ENCODE measurements at regions of chr22 and their contacts with region 1.

Region 1: DNA sequence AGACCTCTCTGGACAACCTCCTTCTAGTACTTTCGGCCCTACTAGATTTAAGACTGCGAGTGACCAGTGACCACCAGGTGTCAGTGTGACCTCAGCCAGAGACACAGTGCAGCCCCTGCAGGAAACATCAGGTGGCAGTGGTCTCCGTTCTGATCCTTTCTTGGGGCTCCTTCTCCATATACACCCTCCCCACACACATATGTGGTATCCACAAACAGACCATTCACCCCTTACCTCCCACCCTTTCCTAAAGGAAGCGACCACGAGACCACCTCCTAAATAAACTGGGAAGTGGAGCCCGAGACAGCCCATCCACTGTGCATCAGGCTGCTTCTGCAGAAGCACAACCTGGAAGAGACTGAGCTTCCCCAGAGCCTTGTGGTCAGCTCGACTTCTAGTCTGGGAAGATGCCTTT is 38.5 kb upstream of the CYP2D6 start:
- H3K4me3 Mint-ChIP-seq: no peak overlapping the region
- H3K27ac Mint-ChIP-seq: no peak overlapping the region
- H3K4me1 Mint-ChIP-seq: peaks cover 30% of the 10 kb centered on the region
- H3K27me3 Mint-ChIP-seq: no peaks in the 10 kb centered on the region

Region 2: DNA sequence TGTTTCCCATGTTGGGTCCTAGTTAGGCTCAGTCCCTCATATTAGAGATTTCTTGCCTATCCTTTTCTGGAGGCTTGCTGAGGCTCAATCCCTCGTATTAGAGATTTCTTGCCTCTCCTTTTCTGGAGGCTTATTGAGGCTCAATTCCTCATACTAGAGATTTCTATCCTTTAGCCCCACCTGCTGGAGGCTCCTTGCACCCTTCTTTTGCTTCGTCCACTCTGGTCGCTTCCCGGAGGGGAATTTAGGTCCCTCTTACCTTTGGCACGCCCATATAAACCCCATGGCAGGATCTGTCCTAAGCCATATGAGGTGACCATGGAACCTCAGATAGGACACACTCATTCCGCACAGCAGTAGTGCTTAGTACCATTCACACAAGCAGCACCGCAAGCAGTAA is 54.3 kb before region 1 on chr22:
- intact Hi-C with region 1: no loop called
- H3K4me3 Mint-ChIP-seq: no peak overlapping the region
- H3K27ac Mint-ChIP-seq: no peak overlapping the region
- H3K4me1 Mint-ChIP-seq: peaks cover 2% of the 10 kb centered on the region
- H3K27me3 Mint-ChIP-seq: peaks cover under 1% of the 10 kb centered on the region

Region 3: DNA sequence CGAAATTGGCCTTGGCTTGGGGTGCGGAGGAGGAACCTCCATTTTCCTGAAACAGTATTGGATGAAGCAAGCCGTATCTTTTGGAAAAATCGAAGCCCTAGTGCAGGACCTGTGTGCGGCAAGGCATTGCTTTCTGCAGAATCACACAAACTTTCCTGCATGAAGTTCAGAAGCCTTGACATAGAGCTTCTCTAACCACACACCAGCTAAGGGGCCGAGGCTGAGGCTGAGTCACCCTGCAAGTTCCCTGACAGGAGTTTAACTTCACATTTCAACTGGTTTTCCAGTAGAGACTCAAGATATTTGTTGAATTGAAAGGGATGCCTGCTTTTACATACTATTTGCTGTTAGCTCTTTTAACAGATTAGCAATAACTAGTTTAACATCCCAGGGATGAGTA is 33.6 kb after region 1 on chr22:
- intact Hi-C with region 1: no loop called
- H3K4me3 Mint-ChIP-seq: peak overlapping the region; percentile 39
- H3K27ac Mint-ChIP-seq: no peak overlapping the region
- H3K4me1 Mint-ChIP-seq: peaks cover 39% of the 10 kb centered on the region
- H3K27me3 Mint-ChIP-seq: no peaks in the 10 kb centered on the region

Region 4: DNA sequence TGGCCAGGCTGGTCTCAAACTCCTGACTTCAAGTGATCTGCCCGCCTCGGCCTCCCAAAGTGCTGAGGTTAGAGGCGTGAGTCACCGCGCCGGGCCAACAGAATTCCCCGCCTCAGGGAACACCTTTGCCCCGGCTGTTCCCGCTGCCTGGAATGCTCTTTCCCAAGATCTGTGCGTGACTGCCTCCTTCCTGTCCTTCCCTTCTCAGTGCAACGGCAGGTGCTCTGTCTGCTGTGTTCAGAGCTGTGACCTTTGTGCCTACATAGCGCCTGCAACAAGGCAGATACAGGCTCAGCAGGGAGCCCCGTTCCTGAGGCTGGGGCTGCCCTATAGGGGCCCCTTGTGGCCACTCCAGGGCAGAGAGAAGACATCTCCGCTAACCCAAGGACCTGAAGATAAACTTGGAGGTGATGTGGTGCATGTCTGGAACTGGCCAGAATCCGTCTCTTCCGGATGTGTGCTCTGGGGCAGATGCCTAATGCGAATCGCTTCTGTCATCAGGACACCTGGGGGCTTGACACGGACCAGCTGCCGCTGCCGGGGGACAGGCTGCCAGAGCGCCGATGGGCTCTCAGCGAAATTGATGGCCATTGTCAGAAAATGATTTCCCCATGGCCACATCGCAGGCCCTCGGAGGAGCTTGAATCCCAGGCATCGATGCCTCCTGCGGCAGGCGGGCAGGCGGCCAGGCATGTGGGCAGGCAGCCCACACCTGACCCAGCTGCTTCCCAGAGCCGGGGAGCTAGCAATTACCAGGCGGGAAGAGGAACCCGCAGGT is 144.9 kb after region 1 on chr22:
- intact Hi-C with region 1: loop called (anchors 5 kb)
- H3K4me3 Mint-ChIP-seq: no peak overlapping the region
- H3K27ac Mint-ChIP-seq: no peak overlapping the region
- H3K4me1 Mint-ChIP-seq: peaks cover 14% of the 10 kb centered on the region
- H3K27me3 Mint-ChIP-seq: peaks cover 41% of the 10 kb centered on the region